IMR-90 (cell line): ENCODE measurements at regions of chr2 and their contacts with region 1.

Region 1: DNA sequence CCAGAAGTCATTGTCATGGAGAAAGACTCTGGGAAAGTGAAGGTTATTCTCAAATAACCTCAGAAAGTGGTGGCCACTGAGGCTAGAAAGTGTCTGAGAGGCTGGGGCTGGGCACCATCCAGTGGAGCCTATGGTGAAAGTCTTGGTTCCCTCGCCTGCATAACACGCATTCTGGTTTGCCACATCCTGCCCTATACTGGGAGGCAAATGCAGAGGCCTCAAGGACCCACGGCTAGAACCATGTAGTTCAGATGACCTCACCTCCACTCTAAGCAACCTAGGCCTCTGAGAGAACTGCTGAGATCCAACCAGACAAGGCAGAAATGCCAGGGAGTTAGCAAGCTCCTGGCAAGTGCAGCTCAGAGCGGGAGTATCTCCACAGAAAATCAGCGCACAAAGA is 5.1 kb downstream of the ITGB6 start:
- DNase-seq: no peak
- ATAC-seq: no peak
- H3K4me3 ChIP-seq: no peak overlapping the region
- H3K27ac ChIP-seq: no peak overlapping the region
- H3K4me1 ChIP-seq: no peaks in the 10 kb centered on the region
- H3K27me3 ChIP-seq: no peaks in the 10 kb centered on the region
- CTCF ChIP-seq: no peak
- POLR2A ChIP-seq: no peak
- RAD21 ChIP-seq: no peak

Region 2: GRCh38 chr2:159716857-159717256 is 478.1 kb before region 1 on chr2:
- CTCF ChIA-PET with region 1: no interaction called
- POLR2A ChIA-PET with region 1: no interaction called
- dilution Hi-C with region 1: no loop called
- in situ Hi-C with region 1: no loop called
- intact Hi-C with region 1: no loop called
- DNase-seq: no peak
- ATAC-seq: no peak
- H3K4me3 ChIP-seq: no peak overlapping the region
- H3K27ac ChIP-seq: no peak overlapping the region
- H3K4me1 ChIP-seq: peaks cover 9% of the 10 kb centered on the region
- H3K27me3 ChIP-seq: no peaks in the 10 kb centered on the region
- CTCF ChIP-seq: no peak
- POLR2A ChIP-seq: no peak
- RAD21 ChIP-seq: no peak

Region 3: GRCh38 chr2:160157861-160158829 is 36.8 kb before region 1 on chr2:
- CTCF ChIA-PET with region 1: no interaction called
- POLR2A ChIA-PET with region 1: no interaction called
- dilution Hi-C with region 1: no loop called
- in situ Hi-C with region 1: no loop called
- intact Hi-C with region 1: loop called (anchors 5 kb)
- DNase-seq: peak; percentile 37
- ATAC-seq: no peak
- H3K4me3 ChIP-seq: no peak overlapping the region
- H3K27ac ChIP-seq: no peak overlapping the region
- H3K4me1 ChIP-seq: no peaks in the 10 kb centered on the region
- H3K27me3 ChIP-seq: no peaks in the 10 kb centered on the region
- CTCF ChIP-seq: no peak
- POLR2A ChIP-seq: no peak
- RAD21 ChIP-seq: no peak